WTC11 (cell line): ENCODE measurements at regions of chr4 and their contacts with region 1.

Region 1: GRCh38 chr4:111854494-111855087 is 290.7 kb upstream of the FAM241A start:
- DNase-seq: no peak
- ATAC-seq: peak; percentile 73
- H3K4me3 Mint-ChIP-seq: no peak overlapping the region
- H3K27ac Mint-ChIP-seq: no peak overlapping the region
- H3K4me1 Mint-ChIP-seq: no peaks in the 10 kb centered on the region
- H3K27me3 Mint-ChIP-seq: no peaks in the 10 kb centered on the region
- CTCF ChIP-seq: peak; percentile 42; the same call in 1 of the 2 replicates

Region 2: GRCh38 chr4:111631215-111631999 is 223.2 kb before region 1 on chr4:
- CTCF ChIA-PET with region 1: interaction called, 12 read pairs
- POLR2A ChIA-PET with region 1: no interaction called
- DNase-seq: no peak
- ATAC-seq: peak; percentile 50
- H3K4me3 Mint-ChIP-seq: no peak overlapping the region
- H3K27ac Mint-ChIP-seq: no peak overlapping the region
- H3K4me1 Mint-ChIP-seq: peaks cover 8% of the 10 kb centered on the region
- H3K27me3 Mint-ChIP-seq: no peaks in the 10 kb centered on the region
- CTCF ChIP-seq: 0 out of 2 replicates have a peak, but pooled peaks have one; percentile 34

Region 3: GRCh38 chr4:111806331-111806730 is 48.3 kb before region 1 on chr4:
- CTCF ChIA-PET with region 1: interaction called, 16 read pairs
- POLR2A ChIA-PET with region 1: no interaction called
- DNase-seq: peak; percentile 64
- ATAC-seq: peak; percentile 98
- H3K4me3 Mint-ChIP-seq: no peak overlapping the region
- H3K27ac Mint-ChIP-seq: no peak overlapping the region
- H3K4me1 Mint-ChIP-seq: peaks cover 14% of the 10 kb centered on the region
- H3K27me3 Mint-ChIP-seq: peaks cover 73% of the 10 kb centered on the region
- CTCF ChIP-seq: peak; percentile 21; the same call in 1 of the 2 replicates

Region 4: DNA sequence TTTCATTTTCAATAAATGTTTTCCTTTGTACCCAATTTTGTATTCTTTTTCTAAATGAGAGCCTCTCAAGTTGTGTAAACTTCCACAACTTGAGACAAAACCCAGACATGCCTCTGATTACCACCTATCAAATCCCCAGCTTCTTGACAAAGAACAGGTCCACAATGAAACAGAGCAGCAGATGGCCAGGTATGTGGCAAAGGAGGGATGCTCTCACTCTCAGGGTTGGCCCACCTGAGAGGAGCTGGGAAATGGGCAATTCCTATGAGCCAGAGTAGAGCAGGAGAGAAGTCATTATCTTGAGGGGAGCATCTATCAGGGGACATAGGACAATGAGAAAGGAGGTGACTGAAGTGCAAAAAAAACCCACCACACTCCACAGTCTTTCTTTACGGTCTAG is 17.2 kb after region 1 on chr4:
- CTCF ChIA-PET with region 1: interaction called, 13 read pairs
- POLR2A ChIA-PET with region 1: no interaction called
- DNase-seq: no peak
- ATAC-seq: peak; percentile 81
- H3K4me3 Mint-ChIP-seq: no peak overlapping the region
- H3K27ac Mint-ChIP-seq: no peak overlapping the region; the same call in 1 of the 2 replicates
- H3K4me1 Mint-ChIP-seq: peaks cover 7% of the 10 kb centered on the region
- H3K27me3 Mint-ChIP-seq: no peaks in the 10 kb centered on the region
- CTCF ChIP-seq: no peak

Region 5: DNA sequence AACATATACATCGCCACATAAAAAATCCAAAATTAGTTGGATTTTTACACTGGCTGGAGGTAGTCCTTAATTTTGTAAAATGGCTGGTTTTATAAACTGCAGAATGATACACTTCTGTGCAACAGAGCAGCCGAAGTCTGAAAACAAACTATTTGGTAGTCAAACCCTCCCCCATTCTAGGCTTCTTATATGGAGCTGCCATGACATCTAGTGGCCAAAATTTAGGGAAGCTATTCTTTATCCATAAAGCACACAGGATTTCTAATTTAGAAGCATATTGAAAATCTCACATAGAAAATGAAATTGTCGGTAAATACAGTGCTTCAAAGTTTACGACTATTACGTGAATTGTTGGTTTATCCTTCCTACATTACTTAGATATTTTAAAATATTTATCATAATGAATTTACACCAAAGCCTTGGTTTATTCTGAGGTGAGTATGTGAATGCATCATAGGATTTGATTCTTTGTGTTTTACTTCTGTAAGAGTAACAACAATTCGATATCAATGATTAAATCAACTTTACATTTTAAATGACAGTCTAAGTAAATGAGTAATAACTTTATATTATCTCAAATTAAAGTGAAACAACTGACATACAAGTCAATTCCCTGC is 177.2 kb after region 1 on chr4:
- CTCF ChIA-PET with region 1: interaction called, 24 read pairs
- POLR2A ChIA-PET with region 1: no interaction called
- DNase-seq: no peak
- ATAC-seq: peak; percentile 68
- H3K4me3 Mint-ChIP-seq: no peak overlapping the region
- H3K27ac Mint-ChIP-seq: no peak overlapping the region
- H3K4me1 Mint-ChIP-seq: peaks cover 21% of the 10 kb centered on the region
- H3K27me3 Mint-ChIP-seq: no peaks in the 10 kb centered on the region
- CTCF ChIP-seq: no peak; the same call in 1 of the 2 replicates